Prostate gland (tissue), 2 donors: ENCODE measurements at regions of chr12 and their contacts with region 1.

Region 1: DNA sequence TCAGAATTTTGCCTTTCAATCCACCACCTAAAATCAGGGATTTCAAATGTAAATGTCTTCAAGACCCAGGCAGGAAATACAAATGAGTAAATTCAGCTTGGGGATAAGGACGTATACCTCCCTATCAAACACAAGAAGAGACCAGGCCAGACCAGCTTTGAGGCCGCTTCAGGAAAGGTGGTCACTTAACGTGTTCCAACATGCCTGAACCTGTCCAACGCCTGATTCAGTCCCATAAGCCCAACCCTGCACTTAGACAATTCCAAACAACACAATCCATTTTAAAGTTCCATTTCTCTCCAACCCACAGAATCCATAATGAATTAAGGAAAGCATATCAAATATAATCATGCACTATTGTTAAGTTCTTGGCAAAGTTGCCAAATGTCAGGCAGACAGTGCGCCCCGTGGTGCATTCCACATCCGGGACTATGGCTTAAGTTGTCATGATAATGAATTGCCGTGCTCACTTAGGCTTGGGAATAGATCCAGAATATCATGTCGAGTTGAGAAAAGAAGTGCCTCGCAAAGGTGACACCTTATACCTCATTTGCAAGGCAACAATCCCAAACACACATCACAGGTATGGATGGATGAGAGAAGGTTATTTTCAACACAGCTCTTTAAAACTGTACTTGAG is 35.5 kb downstream of the CCDC60 start:
- DNase-seq: peak; percentile 39
- H3K4me3 ChIP-seq: no peak overlapping the region
- H3K27ac ChIP-seq: peak overlapping the region; percentile 47 to 65
- H3K4me1 ChIP-seq: no peaks in the 10 kb centered on the region
- H3K27me3 ChIP-seq: no peaks in the 10 kb centered on the region
- CTCF ChIP-seq: no peak
- POLR2A ChIP-seq: no peak

Region 2: GRCh38 chr12:119176267-119176849 is 193.7 kb before region 1 on chr12:
- intact Hi-C with region 1: loop called (anchors 5 kb)
- DNase-seq: peak; percentile 83
- H3K4me3 ChIP-seq: peak overlapping the region in 1 of 2 donors; percentile 8
- H3K27ac ChIP-seq: peak overlapping the region; percentile 66 to 87
- H3K4me1 ChIP-seq: peaks cover 2% of the 10 kb centered on the region
- H3K27me3 ChIP-seq: no peaks in the 10 kb centered on the region
- CTCF ChIP-seq: no peak
- POLR2A ChIP-seq: peak; percentile 40

Region 3: DNA sequence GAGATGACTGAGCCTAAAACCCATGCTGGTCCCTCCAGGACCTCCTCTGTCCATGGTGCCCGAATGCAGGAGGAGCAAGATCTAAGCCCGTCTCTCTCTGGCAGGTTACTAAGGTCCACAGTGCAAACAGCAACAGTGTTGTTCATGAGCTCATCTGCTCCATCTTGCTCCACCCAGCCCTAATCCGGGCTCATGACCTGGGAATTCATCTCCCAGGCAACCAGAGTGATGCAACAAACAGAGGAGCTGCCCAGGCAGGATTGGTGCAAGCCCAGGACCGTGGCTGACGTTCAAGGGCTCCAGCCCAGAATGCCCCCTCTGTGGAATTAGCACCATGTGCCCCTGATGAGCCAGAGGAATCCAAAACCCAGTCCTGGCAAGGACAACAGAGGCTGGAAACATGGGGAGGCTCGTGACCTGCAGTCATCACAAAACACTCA is 161.4 kb before region 1 on chr12:
- intact Hi-C with region 1: loop called (anchors 5 kb)
- DNase-seq: peak; percentile 8
- H3K4me3 ChIP-seq: no peak overlapping the region
- H3K27ac ChIP-seq: no peak overlapping the region
- H3K4me1 ChIP-seq: no peaks in the 10 kb centered on the region
- H3K27me3 ChIP-seq: no peaks in the 10 kb centered on the region
- CTCF ChIP-seq: no peak
- POLR2A ChIP-seq: no peak

Region 4: GRCh38 chr12:119328111-119328510 is 41.9 kb before region 1 on chr12:
- intact Hi-C with region 1: loop called (anchors 5 kb)
- DNase-seq: no peak
- H3K4me3 ChIP-seq: no peak overlapping the region
- H3K27ac ChIP-seq: no peak overlapping the region
- H3K4me1 ChIP-seq: no peaks in the 10 kb centered on the region
- H3K27me3 ChIP-seq: no peaks in the 10 kb centered on the region
- CTCF ChIP-seq: peak in 2 of 4 experiments; percentile 9 to 21
- POLR2A ChIP-seq: no peak